MCF 10A (cell line): ENCODE measurements at regions of chr5 and their contacts with region 1.

Region 1: GRCh38 chr5:163505368-163506094 is at the start of gene MAT2B:
- DNase-seq: peak; percentile 99
- H3K4me3 Mint-ChIP-seq: peak within 1 kb of the TSS; percentile 96
- H3K27ac Mint-ChIP-seq: peak within 1 kb of the TSS; percentile 98
- H3K4me1 Mint-ChIP-seq: peaks cover 38% of the 10 kb centered on the region
- H3K27me3 Mint-ChIP-seq: no peaks in the 10 kb centered on the region
- CTCF ChIP-seq: peak; percentile 30
- total RNA-seq, gene MAT2B: 67.5 and 70.9 TPM in 2 replicates

Region 2: DNA sequence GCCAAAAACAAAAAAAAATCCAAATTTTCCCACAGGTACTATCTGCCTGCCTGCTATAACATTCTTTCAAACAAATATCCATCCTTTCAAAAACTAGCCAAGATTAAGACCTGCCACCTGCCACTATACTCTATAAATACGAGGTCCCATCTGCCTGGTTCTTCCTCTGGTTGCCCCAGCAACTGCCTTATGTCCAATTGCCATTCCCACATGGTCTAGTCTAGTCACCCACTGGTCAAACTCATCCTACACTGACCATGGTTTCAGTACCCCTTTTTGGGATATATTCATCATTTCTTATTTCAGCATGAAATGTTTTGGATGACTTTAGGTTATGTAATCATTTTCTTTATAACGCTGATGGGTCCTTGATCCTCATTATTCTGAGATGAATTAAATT is 163.2 kb before region 1 on chr5:
- CTCF ChIA-PET with region 1: no interaction called
- POLR2A ChIA-PET with region 1: no interaction called
- intact Hi-C with region 1: no loop called
- DNase-seq: no peak
- H3K4me3 Mint-ChIP-seq: no peak overlapping the region
- H3K27ac Mint-ChIP-seq: no peak overlapping the region
- H3K4me1 Mint-ChIP-seq: no peaks in the 10 kb centered on the region
- H3K27me3 Mint-ChIP-seq: no peaks in the 10 kb centered on the region
- CTCF ChIP-seq: no peak

Region 3: GRCh38 chr5:163437309-163438182 is 68.0 kb before region 1 on chr5 and contains the start of gene CCNG1:
- CTCF ChIA-PET with region 1: interaction called, 4 read pairs
- POLR2A ChIA-PET with region 1: interaction called, 106 read pairs
- intact Hi-C with region 1: loop called (anchors 2 kb)
- DNase-seq: peak; percentile 100
- H3K4me3 Mint-ChIP-seq: peak within 1 kb of the TSS; percentile 92
- H3K27ac Mint-ChIP-seq: peak within 1 kb of the TSS; percentile 93
- H3K4me1 Mint-ChIP-seq: peaks cover 32% of the 10 kb centered on the region
- H3K27me3 Mint-ChIP-seq: no peaks in the 10 kb centered on the region
- CTCF ChIP-seq: peak; percentile 10
- total RNA-seq, gene CCNG1: 169 and 196 TPM in 2 replicates

Region 4: GRCh38 chr5:163459922-163460766 is 45.4 kb before region 1 on chr5 and contains the starts of genes HMMR and NUDCD2:
- CTCF ChIA-PET with region 1: interaction called, 13 read pairs
- POLR2A ChIA-PET with region 1: interaction called, 352 read pairs
- intact Hi-C with region 1: loop called (anchors 1 kb)
- DNase-seq: peak; percentile 100
- H3K4me3 Mint-ChIP-seq: peak within 1 kb of the TSS; percentile 83
- H3K27ac Mint-ChIP-seq: peak within 1 kb of the TSS; percentile 99
- H3K4me1 Mint-ChIP-seq: peaks cover 48% of the 10 kb centered on the region
- H3K27me3 Mint-ChIP-seq: no peaks in the 10 kb centered on the region
- CTCF ChIP-seq: peak; percentile 13
- total RNA-seq, gene HMMR: 29.3 and 43.5 TPM in 2 replicates
- total RNA-seq, gene NUDCD2: 57.8 and 68.0 TPM in 2 replicates

Region 5: DNA sequence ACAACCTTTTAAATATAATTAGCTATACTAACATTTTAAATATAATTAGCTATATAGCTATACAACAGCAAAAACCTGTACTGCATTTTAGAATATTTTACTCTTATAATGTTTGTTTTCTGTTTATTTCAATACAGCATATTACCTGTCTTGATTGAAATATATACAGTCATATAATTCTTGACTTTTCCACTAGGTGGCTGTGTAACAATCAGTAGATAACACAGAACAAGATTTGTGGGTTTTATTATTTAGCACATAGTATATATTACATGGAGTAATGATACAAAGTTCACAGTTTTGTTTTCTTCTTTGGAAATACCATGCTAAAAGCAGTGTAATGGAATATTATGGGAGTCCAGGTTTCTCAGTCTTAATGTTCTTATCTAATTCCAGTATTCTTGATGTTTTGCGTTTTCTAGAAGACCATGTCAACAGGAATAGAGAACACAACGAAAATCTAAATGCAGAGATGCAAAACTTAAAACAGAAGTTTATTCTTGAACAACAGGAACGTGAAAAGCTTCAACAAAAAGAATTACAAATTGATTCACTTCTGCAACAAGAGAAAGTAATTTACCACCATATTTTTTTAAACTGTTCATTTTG is 31.8 kb before region 1 on chr5:
- CTCF ChIA-PET with region 1: interaction called, 60 read pairs
- POLR2A ChIA-PET with region 1: interaction called, 158 read pairs
- intact Hi-C with region 1: loop called (anchors 1 kb)
- DNase-seq: peak; percentile 46
- H3K4me3 Mint-ChIP-seq: no peak overlapping the region
- H3K27ac Mint-ChIP-seq: no peak overlapping the region
- H3K4me1 Mint-ChIP-seq: peaks cover 13% of the 10 kb centered on the region
- H3K27me3 Mint-ChIP-seq: no peaks in the 10 kb centered on the region
- CTCF ChIP-seq: peak; percentile 42

Region 6: GRCh38 chr5:163525096-163525495 is 19.6 kb after region 1 on chr5:
- CTCF ChIA-PET with region 1: no interaction called
- POLR2A ChIA-PET with region 1: interaction called, 18 read pairs
- intact Hi-C with region 1: no loop called
- DNase-seq: no peak
- H3K4me3 Mint-ChIP-seq: no peak overlapping the region
- H3K27ac Mint-ChIP-seq: no peak overlapping the region
- H3K4me1 Mint-ChIP-seq: no peaks in the 10 kb centered on the region
- H3K27me3 Mint-ChIP-seq: no peaks in the 10 kb centered on the region
- CTCF ChIP-seq: no peak

Region 7: GRCh38 chr5:164235300-164235891 is 729.9 kb after region 1 on chr5:
- CTCF ChIA-PET with region 1: no interaction called
- POLR2A ChIA-PET with region 1: no interaction called
- intact Hi-C with region 1: loop called (anchors 5 kb)
- DNase-seq: peak; percentile 93
- H3K4me3 Mint-ChIP-seq: no peak overlapping the region
- H3K27ac Mint-ChIP-seq: no peak overlapping the region
- H3K4me1 Mint-ChIP-seq: peaks cover 28% of the 10 kb centered on the region
- H3K27me3 Mint-ChIP-seq: no peaks in the 10 kb centered on the region
- CTCF ChIP-seq: no peak